ENCODE measurements at regions of chr19 and their contacts with region 1.

Region 1: DNA sequence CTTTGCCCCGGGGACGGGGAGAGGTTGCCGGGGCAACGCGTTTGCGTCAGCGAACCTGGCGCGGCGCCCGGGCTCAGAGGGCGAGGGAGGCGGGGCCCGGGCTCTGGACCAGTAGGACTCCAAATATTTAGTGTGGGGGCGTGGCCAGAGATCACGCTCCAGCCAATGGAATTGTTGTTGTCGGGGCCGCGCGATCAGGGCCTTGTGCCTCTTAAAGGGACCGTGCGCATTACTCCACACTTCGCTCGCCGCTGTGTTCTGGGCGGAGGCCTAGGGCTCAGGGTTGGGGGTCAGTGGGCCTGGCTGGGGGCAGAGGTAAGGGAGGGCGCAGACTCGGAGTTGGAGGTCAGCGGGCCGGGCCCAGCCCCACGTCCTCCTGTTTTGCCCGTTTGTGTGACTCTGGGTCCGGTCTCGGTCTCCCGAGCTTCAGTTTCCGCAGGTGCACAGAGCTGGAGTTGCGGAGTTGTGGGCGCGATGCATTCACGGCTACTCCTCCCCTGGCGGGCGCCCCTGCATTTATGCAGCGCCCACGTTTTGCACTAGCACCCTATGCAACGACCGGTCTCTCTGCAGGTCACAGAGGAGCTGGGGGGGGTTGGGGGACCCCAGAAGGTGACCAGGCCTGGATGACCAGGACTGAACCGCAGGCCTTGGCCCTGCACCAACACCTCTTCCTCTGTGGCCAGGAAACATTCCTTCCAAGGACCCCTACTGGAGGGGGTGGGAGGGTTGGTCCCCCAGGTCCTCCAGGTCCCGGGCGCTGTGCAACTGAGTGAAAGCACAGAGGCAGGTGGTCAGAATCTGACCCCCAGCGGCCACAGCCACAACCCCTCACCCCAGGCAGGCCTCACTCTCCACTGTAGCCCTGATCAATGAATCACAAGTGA is 10.7 kb upstream of the MKNK2 start:
- DNase-seq: peak; percentile 100
- ATAC-seq: peak; percentile 91
- H3K4me3 Mint-ChIP-seq: peak overlapping the region; percentile 88
- H3K27ac Mint-ChIP-seq: peak overlapping the region; percentile 92
- H3K4me1 Mint-ChIP-seq: peaks cover 37% of the 10 kb centered on the region
- H3K27me3 Mint-ChIP-seq: no peaks in the 10 kb centered on the region

Region 2: GRCh38 chr19:1796395-1797142 is 265.2 kb before region 1 on chr19:
- CTCF ChIA-PET with region 1: no interaction called
- POLR2A ChIA-PET with region 1: no interaction called
- intact Hi-C with region 1: no loop called
- DNase-seq: no peak
- ATAC-seq: no peak
- H3K4me3 Mint-ChIP-seq: no peak overlapping the region
- H3K27ac Mint-ChIP-seq: no peak overlapping the region
- H3K4me1 Mint-ChIP-seq: peaks cover 6% of the 10 kb centered on the region
- H3K27me3 Mint-ChIP-seq: peaks cover 11% of the 10 kb centered on the region

Region 3: GRCh38 chr19:1875646-1876495 is 185.9 kb before region 1 on chr19:
- CTCF ChIA-PET with region 1: no interaction called
- POLR2A ChIA-PET with region 1: no interaction called
- intact Hi-C with region 1: loop called in 1 of 2 experiments (anchors 1 kb)
- DNase-seq: peak; percentile 95
- ATAC-seq: peak; percentile 96
- H3K4me3 Mint-ChIP-seq: peak overlapping the region; percentile 92
- H3K27ac Mint-ChIP-seq: peak overlapping the region; percentile 97
- H3K4me1 Mint-ChIP-seq: peaks cover 20% of the 10 kb centered on the region
- H3K27me3 Mint-ChIP-seq: no peaks in the 10 kb centered on the region

Region 4: DNA sequence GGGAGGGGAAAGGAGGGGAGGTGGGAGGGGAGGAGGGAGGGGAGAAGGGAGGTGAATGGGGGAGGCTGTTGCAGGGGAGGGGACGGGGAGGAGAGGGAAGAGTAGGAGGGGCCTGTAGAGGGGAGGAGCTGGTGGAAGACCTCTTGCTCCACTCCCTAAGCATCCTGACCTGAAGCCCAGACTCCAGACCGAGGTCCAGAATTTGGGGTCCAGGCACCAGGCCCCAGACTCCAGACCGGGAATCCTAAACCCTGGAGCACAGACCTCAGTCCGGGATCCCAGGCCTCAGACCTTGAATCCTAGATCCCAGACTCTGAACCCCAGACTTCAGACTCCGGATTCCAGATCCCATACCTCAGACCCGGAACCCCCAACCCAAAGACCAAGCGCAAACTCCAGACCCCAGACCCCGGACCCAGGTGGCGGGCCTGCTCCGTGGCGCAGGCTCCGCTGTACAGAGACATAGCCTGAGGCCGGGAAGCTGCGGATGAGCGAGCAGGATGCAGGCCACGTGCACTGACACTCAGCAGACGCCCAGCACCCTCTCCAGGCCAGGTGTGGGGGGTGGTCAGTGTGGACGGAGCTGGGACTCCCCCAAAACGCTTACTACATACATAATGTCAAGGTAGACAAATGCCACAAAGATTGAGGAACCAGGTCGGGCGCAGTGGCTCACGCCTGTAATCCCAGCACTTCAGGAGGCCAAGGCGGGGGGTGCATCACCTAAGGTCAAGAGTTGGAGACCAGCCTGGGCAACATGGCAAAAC is 45.5 kb before region 1 on chr19:
- CTCF ChIA-PET with region 1: interaction called, 5 read pairs
- POLR2A ChIA-PET with region 1: no interaction called
- intact Hi-C with region 1: loop called (anchors 1 to 2 kb)
- DNase-seq: peak; percentile 85
- ATAC-seq: peak; percentile 77
- H3K4me3 Mint-ChIP-seq: peak overlapping the region; percentile 66
- H3K27ac Mint-ChIP-seq: peak overlapping the region; percentile 58
- H3K4me1 Mint-ChIP-seq: peaks cover 21% of the 10 kb centered on the region
- H3K27me3 Mint-ChIP-seq: no peaks in the 10 kb centered on the region

Region 5: DNA sequence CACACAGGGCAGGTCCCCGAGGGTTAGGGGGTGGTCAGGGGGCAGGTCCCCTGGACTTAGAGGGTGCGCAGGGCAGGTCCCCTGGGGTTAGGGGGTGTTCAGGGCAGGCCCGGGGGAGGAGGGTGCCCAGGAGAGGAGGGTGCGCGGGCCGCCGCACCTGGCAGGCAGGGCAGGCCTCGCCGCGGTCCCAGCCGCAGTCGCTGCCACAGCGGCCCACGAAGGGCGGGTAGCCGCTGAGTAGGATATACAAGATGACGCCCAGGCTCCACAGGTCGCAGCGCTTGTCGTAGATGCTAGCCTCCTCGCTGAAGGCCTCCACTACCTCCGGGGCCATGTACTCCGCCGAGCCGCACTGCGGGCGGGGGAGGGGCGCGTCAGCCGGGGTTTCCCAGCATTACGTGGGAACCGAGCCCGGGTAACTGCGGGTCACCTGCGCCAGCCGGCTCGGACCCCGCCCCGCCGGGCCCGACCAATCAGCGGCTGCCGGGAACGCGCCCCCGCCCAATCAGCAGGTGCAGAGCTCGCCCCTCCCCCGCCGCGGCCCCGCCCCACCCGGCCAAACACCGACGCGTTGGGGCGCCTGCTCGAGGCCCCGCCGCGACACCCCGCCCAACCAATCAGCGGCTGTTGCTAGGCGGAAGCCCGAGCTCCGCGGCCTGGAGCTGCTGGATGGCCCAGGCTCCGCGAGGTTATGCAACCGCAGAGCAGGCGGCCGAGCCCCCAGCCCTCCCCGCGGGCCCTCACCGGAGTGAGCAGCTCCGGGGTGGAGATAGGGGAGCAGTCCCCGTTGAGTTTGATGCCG is 19.9 kb before region 1 on chr19:
- CTCF ChIA-PET with region 1: interaction called, 3 read pairs
- POLR2A ChIA-PET with region 1: no interaction called
- intact Hi-C with region 1: loop called (anchors 1 kb)
- DNase-seq: peak; percentile 100
- ATAC-seq: peak; percentile 88
- H3K4me3 Mint-ChIP-seq: peak overlapping the region; percentile 73
- H3K27ac Mint-ChIP-seq: peak overlapping the region; percentile 88
- H3K4me1 Mint-ChIP-seq: peaks cover 17% of the 10 kb centered on the region
- H3K27me3 Mint-ChIP-seq: no peaks in the 10 kb centered on the region

Region 6: DNA sequence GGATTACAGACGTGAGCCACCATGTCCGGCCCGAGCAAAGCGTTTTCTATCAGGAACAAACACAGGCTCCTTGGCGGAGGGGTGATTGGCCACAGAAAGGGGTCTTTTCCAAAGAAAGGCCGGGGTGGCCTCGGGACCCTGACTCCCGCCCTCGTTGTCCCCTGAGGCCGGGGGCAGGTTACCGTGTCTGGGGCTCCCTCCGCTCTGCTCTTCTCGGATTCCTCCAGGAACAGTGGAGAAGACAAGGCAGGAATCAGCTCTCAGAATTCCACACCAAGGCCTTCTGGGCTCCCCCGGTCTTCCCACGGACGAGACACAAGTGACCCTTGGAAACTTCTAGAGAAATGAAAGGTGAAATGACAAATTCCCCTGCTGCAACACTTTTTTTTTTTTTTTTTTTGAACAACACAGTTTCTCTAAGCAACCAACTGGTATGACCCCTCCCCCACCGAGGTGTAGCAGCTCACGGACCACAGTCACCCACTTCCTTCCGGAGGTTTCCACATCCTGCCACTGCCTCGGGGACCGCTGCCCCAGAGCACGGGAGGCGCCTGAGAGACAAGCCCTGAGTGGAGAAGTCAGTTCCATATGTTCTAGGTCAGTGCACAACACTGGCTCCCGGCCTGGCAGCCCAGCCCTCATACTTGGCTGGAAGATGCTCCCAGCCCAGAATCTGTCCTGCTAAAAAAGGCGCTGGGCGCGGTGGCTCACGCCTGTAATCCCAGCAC is 23.4 kb after region 1 on chr19:
- CTCF ChIA-PET with region 1: interaction called, 4 read pairs
- POLR2A ChIA-PET with region 1: interaction called, 4 read pairs
- intact Hi-C with region 1: loop called in 1 of 2 experiments (anchors 1 kb)
- DNase-seq: peak; percentile 97
- ATAC-seq: peak; percentile 64
- H3K4me3 Mint-ChIP-seq: peak overlapping the region; percentile 96
- H3K27ac Mint-ChIP-seq: peak overlapping the region; percentile 99
- H3K4me1 Mint-ChIP-seq: peaks cover 57% of the 10 kb centered on the region
- H3K27me3 Mint-ChIP-seq: no peaks in the 10 kb centered on the region

Region 7: DNA sequence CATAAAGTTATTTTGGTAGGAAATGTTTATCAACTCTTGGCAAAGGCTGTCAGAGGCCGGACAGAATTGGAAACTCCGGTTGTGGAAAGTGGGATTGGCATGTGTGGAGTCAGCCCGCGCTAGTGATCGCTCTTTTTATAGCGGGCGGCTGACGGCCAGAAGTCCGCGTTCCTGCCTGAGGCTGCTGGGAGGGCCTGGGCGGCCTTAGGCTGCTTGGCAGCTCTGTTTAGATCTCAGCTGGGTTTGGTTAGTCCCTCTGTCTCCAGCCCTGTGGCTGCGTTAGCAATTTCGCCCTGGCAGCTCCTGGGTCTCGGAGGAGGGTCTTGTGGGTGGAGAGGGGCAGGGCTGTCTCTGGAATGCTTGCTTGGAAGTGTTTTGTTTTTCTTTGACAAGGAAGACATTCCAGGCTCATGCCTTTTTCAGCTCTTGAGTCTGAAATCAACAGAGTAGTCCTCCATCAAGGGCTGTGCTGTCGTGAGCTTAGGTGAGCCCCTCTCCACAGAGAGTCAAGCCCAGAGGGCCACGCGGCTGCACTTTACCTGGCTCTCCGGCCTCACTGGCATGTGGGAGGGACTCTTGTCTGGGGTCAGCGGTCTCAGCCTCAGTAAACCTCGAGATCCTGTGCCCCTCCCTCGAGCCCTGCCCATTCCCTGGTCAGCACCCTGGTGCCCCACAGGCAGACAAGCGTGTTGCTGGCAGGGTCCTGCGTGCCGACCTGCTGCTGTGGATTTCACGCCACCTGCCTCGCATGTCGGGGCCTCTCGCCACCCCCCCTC is 124.5 kb after region 1 on chr19:
- CTCF ChIA-PET with region 1: no interaction called
- POLR2A ChIA-PET with region 1: no interaction called
- intact Hi-C with region 1: no loop called
- DNase-seq: no peak
- ATAC-seq: no peak
- H3K4me3 Mint-ChIP-seq: no peak overlapping the region
- H3K27ac Mint-ChIP-seq: no peak overlapping the region
- H3K4me1 Mint-ChIP-seq: no peaks in the 10 kb centered on the region
- H3K27me3 Mint-ChIP-seq: no peaks in the 10 kb centered on the region

Measured in activated CD4-positive, alpha-beta T cell treated with anti-CD3 and anti-CD28 coated beads for 36 hours (primary cell).